ENCODE measurements at regions of chr1 and their contacts with region 1.

Region 1: GRCh38 chr1:77143529-77144121 is 75.6 kb downstream of the PIGK start:
- DNase-seq: no peak
- ATAC-seq: no peak
- H3K4me3 Mint-ChIP-seq: no peak overlapping the region
- H3K27ac Mint-ChIP-seq: no peak overlapping the region
- H3K4me1 Mint-ChIP-seq: peaks cover 4% of the 10 kb centered on the region
- H3K27me3 Mint-ChIP-seq: no peaks in the 10 kb centered on the region

Region 2: DNA sequence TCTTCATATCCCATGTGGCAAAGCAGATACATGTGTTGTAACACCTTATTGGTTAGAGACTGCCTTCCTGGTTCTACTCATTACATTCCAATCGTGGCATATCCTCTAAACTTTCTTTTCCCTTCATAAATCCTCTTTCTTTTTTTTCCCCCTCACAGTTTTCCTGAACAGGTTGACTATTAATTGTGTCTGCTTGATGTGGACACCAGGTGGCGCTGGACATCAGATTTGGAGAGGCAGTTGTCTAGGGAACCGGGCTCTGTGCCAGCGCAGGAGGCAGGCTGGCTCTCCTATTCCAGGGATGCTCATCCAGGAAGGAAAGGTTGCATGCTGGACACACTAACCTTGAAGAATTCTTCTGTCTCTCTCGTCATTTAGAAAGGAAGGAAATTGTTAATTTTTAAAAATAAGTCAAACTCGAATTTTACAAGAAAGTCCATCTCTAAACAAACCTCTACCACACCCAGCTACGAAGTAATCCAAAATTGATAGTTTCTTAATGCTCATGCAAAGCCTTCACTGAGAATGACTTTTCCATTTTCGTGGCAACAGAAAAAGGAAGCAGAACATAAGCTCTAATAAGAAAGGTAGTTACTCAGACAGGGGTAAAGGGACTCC is 1152.0 kb before region 1 on chr1:
- CTCF ChIA-PET with region 1: no interaction called
- POLR2A ChIA-PET with region 1: no interaction called
- intact Hi-C with region 1: loop called in 1 of 2 experiments (anchors 5 kb)
- DNase-seq: peak; percentile 87
- ATAC-seq: peak; percentile 60
- H3K4me3 Mint-ChIP-seq: no peak overlapping the region
- H3K27ac Mint-ChIP-seq: no peak overlapping the region
- H3K4me1 Mint-ChIP-seq: no peaks in the 10 kb centered on the region
- H3K27me3 Mint-ChIP-seq: no peaks in the 10 kb centered on the region

Region 3: DNA sequence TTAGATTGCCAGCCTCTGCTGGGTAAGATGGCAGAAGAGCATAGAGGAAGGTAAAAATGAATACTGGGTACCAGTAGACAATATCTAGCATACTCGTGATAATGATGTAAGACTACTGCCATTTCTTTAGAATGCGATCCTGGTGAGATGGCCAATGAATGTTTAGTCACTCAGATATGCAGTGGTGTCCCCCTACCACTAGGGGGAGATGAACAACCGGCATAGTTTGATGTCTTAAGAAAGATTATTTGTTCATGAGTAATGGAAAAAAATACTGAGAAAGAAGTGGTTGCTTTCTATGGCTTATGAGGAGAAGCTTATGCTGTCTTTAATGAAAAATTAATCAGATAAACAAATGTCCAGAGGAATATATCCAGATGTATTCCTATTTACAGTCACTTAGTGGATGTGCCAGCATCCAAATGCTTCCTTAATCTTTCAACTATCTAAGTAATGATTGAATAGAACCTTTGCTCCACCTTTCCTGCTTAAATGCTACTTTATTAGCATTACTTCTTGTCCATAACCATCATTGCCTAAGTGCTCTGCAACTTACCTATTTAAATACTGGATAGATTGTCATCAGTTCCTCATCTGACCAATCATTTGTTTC is 812.5 kb before region 1 on chr1:
- CTCF ChIA-PET with region 1: interaction called, 3 read pairs
- POLR2A ChIA-PET with region 1: no interaction called
- intact Hi-C with region 1: loop called in 1 of 2 experiments (anchors 5 kb)
- DNase-seq: peak; percentile 58
- ATAC-seq: peak; percentile 91
- H3K4me3 Mint-ChIP-seq: no peak overlapping the region
- H3K27ac Mint-ChIP-seq: peak overlapping the region; percentile 63
- H3K4me1 Mint-ChIP-seq: peaks cover 8% of the 10 kb centered on the region
- H3K27me3 Mint-ChIP-seq: no peaks in the 10 kb centered on the region

Region 4: DNA sequence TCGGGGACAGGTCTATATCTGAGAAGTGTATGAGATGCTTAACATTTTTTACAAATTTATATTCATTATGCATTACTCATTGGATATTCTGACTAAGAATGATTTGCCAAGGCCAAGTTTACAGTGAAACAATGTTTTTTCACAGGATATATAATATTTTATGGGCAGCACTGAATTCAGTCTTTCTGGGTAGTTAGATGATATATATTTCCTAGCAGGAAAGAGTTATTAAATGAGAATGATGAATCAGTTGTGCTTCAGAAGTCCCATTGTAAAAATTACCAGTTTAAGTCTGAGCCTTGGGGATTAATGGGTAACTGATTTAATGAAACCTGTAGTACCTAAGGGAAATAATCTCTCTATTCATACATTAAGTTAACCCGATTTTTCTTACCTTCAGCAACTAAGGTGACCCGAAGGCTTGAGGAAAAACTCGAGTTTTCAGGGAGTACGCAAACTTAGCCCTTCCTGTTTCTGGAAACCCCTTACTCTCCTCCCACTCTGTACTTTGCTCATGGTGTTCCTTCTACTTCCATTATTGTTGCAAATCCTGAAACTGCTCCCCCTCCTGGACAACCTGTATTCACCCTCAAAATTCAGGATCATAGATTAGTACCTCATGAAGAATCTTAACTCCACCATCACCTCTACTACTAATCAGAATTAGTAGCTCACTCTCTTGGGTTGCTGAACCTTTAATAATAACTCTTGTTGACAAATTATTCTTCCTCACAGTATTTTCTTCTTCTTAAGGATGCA is 273.2 kb after region 1 on chr1:
- CTCF ChIA-PET with region 1: no interaction called
- POLR2A ChIA-PET with region 1: no interaction called
- intact Hi-C with region 1: loop called in 1 of 2 experiments (anchors 5 kb)
- DNase-seq: no peak
- ATAC-seq: no peak
- H3K4me3 Mint-ChIP-seq: no peak overlapping the region
- H3K27ac Mint-ChIP-seq: no peak overlapping the region
- H3K4me1 Mint-ChIP-seq: peaks cover 50% of the 10 kb centered on the region
- H3K27me3 Mint-ChIP-seq: no peaks in the 10 kb centered on the region

Region 5: GRCh38 chr1:77533660-77534305 is 390.2 kb after region 1 on chr1:
- CTCF ChIA-PET with region 1: interaction called, 16 read pairs
- POLR2A ChIA-PET with region 1: no interaction called
- intact Hi-C with region 1: loop called (anchors 1 kb)
- DNase-seq: peak; percentile 75
- ATAC-seq: peak; percentile 70
- H3K4me3 Mint-ChIP-seq: no peak overlapping the region
- H3K27ac Mint-ChIP-seq: peak overlapping the region; percentile 69
- H3K4me1 Mint-ChIP-seq: peaks cover 7% of the 10 kb centered on the region
- H3K27me3 Mint-ChIP-seq: no peaks in the 10 kb centered on the region

Region 6: GRCh38 chr1:78114034-78114956 is 970.7 kb after region 1 on chr1:
- CTCF ChIA-PET with region 1: no interaction called
- POLR2A ChIA-PET with region 1: no interaction called
- intact Hi-C with region 1: loop called in 1 of 2 experiments (anchors 2 kb)
- DNase-seq: peak; percentile 72
- ATAC-seq: peak; percentile 93
- H3K4me3 Mint-ChIP-seq: no peak overlapping the region
- H3K27ac Mint-ChIP-seq: no peak overlapping the region
- H3K4me1 Mint-ChIP-seq: peaks cover 5% of the 10 kb centered on the region
- H3K27me3 Mint-ChIP-seq: no peaks in the 10 kb centered on the region